Ascending aorta (tissue), 2 donors: ENCODE measurements at regions of chr19 and their contacts with region 1.

Region 1: DNA sequence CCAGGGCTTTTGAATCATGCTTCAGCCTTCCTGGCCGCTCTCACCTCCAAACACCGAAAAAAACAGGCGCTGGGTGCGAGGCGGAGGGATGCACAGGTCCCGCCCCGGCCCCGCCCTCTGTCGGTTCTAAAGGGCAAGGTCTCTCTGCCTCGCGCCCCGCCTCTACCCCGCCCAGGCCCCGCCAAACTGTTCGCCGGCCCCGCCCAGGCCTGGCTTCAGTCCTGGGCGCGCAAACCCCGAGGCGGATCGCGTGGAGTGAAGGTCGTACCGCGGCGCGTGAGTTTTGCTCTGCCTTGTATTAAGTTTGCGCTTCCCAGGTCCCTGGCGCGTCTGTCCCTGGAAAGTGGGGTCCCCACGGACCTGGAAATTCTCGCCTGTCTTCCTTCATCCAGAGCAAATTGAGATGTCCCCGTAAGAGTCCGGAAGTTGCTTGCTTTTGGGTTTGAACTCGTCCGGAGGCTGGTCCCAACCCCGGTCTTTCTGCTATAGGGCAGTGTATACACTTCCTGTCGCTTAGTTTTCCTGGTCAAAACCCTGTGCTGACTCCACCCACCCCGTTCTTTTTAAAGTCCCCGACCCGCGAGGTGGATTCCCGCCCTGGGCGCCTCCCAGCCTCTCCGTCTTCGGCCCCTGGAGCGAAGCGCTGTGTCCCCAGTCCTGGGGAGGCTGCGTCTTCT is 8.4 kb downstream of the ZNF808 start:
- DNase-seq: peak; percentile 70 to 93
- H3K4me3 ChIP-seq: peak overlapping the region; percentile 58 to 66
- H3K27ac ChIP-seq: peak overlapping the region; percentile 61 to 77
- H3K4me1 ChIP-seq: peaks cover 0 to 8% of the 10 kb centered on the region in 2 donors
- H3K27me3 ChIP-seq: no peaks in the 10 kb centered on the region
- CTCF ChIP-seq: peak in 2 of 3 experiments; percentile 23 to 33

Region 2: GRCh38 chr19:52397310-52398080 is 138.4 kb before region 1 on chr19 and contains the start of gene ZNF528:
- intact Hi-C with region 1: loop called (anchors 2 kb)
- DNase-seq: peak; percentile 72 to 97
- H3K4me3 ChIP-seq: peak within 1 kb of the TSS; percentile 79 to 90
- H3K27ac ChIP-seq: peak within 1 kb of the TSS; percentile 64 to 84
- H3K4me1 ChIP-seq: peaks cover 7 to 15% of the 10 kb centered on the region in 2 donors
- H3K27me3 ChIP-seq: no peaks in the 10 kb centered on the region
- CTCF ChIP-seq: no peak
- total RNA-seq, gene ZNF528: 4.0 TPM

Region 3: GRCh38 chr19:52520003-52520402 is 15.9 kb before region 1 on chr19:
- intact Hi-C with region 1: no loop called
- DNase-seq: no peak
- H3K4me3 ChIP-seq: no peak overlapping the region
- H3K27ac ChIP-seq: no peak overlapping the region
- H3K4me1 ChIP-seq: no peaks in the 10 kb centered on the region
- H3K27me3 ChIP-seq: no peaks in the 10 kb centered on the region
- CTCF ChIP-seq: no peak

Region 4: DNA sequence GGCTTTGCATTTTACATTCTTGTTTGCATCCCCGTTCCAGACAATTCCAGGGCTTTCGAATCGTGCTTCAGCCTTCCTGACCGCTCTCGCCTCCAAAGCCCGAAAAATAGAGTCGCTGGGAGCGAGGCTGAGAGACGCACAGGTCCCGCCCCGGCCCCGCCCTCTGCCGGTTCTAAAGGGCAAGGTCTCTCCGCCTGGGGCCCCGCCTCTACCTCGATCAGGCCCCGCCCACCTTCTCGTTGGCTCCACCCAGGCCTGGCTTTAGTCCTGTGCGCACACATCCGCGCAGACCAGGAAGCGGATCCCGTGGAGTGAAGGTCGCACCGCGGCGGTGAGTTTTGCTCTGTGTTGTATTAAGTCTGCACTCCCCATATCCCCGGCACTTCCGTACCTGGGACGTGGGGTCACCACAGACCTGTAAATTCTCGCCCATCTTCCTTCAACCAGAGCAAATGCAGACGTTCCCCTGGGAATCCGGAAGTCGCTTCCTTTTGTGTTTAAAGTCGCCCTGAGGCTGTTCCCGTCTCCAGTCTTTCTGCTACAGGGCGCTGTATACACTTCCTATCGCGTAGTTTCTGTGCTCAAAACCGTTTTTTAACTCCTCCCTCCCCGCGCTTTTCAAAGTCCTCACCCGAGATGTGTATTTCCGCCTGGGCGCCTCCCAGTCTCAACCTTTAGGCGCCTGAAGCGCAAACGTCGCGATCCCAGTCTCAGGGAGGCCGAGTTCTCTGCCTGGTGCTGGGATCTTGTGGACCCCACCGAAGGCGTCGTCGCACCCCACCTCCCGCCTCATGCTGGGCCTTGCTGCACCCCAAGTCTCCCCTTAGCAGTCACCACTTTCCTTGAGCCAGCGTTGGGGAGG is 34.3 kb after region 1 on chr19 and contains the start of gene ZNF701:
- intact Hi-C with region 1: loop called (anchors 2 kb)
- DNase-seq: peak; percentile 81 to 98
- H3K4me3 ChIP-seq: peak within 1 kb of the TSS; percentile 80 to 82
- H3K27ac ChIP-seq: peak within 1 kb of the TSS; percentile 75 to 86
- H3K4me1 ChIP-seq: peaks cover 0 to 5% of the 10 kb centered on the region in 2 donors
- H3K27me3 ChIP-seq: no peaks in the 10 kb centered on the region
- CTCF ChIP-seq: peak in 2 of 3 experiments; percentile 26 to 48
- total RNA-seq, gene ZNF701: 13.2 TPM

Region 5: GRCh38 chr19:52690369-52691214 is 154.7 kb after region 1 on chr19:
- intact Hi-C with region 1: loop called (anchors 2 kb)
- DNase-seq: peak; percentile 89 to 98
- H3K4me3 ChIP-seq: peak overlapping the region; percentile 56 to 89
- H3K27ac ChIP-seq: peak overlapping the region; percentile 95 to 98
- H3K4me1 ChIP-seq: peaks cover 3 to 28% of the 10 kb centered on the region in 2 donors
- H3K27me3 ChIP-seq: no peaks in the 10 kb centered on the region
- CTCF ChIP-seq: peak in 2 of 3 experiments; percentile 16 to 19

Region 6: GRCh38 chr19:53003993-53004661 is 468.2 kb after region 1 on chr19:
- intact Hi-C with region 1: no loop called
- DNase-seq: no peak
- H3K4me3 ChIP-seq: no peak overlapping the region
- H3K27ac ChIP-seq: no peak overlapping the region
- H3K4me1 ChIP-seq: no peaks in the 10 kb centered on the region
- H3K27me3 ChIP-seq: no peaks in the 10 kb centered on the region
- CTCF ChIP-seq: no peak